ENCODE measurements at regions of chr3 and their contacts with region 1.

Region 1: DNA sequence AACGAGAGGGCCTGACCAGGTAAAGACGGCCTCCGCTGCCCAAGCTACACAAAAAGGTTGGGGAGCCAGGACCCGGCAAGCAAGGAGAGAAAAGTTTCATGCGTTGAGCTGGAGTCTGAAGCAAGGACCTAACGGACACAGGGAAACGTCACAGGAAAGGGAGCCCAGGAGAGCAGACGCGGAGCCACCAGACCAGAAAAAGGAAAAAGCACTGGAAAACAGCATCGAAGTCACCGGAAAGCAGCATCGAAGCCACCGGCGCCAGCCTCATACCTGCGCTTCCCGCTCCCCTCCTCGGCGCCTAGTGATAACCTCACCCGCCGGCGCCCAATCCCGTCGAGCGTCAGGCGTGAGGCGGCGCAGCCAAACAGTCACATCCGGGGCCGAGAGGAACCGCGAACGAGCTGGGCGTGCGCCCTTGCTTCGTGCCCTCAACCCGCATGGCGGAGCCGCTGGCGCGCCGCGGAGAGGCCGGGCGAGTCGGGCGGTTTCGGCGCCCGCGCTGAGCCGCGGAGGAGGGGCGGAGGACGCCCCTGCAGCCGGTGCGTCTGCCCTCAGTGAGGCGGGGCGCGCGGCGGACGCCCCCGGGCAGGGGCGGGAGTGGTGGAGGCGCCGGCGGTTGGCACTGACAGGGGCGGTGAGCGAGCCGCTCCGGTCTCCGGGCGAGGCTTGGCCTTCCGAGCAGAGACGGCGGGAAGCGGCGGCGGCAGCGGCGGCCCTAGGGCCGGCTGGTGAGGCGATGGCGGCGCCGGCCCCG is at the starts of genes FBXO45 and WDR53:
- DNase-seq: peak; percentile 90 to 99 (median 94)
- ATAC-seq: peak; percentile 90
- H3K4me3 ChIP-seq: peak within 1 kb of the TSS; percentile 76
- H3K4me3 Mint-ChIP-seq: peak within 1 kb of the TSS; percentile 98
- H3K27ac ChIP-seq: peak within 1 kb of the TSS; percentile 77 to 81
- H3K27ac Mint-ChIP-seq: peak within 1 kb of the TSS; percentile 97
- H3K4me1 ChIP-seq: peaks cover 47% of the 10 kb centered on the region
- H3K4me1 Mint-ChIP-seq: peaks cover 48% of the 10 kb centered on the region
- H3K27me3 ChIP-seq: no peaks in the 10 kb centered on the region
- H3K27me3 Mint-ChIP-seq: no peaks in the 10 kb centered on the region
- CTCF ChIP-seq: no peak
- total RNA-seq, gene FBXO45: 5.4 to 6.0 TPM
- total RNA-seq, gene WDR53: 18.4 to 20.9 TPM

Region 2: DNA sequence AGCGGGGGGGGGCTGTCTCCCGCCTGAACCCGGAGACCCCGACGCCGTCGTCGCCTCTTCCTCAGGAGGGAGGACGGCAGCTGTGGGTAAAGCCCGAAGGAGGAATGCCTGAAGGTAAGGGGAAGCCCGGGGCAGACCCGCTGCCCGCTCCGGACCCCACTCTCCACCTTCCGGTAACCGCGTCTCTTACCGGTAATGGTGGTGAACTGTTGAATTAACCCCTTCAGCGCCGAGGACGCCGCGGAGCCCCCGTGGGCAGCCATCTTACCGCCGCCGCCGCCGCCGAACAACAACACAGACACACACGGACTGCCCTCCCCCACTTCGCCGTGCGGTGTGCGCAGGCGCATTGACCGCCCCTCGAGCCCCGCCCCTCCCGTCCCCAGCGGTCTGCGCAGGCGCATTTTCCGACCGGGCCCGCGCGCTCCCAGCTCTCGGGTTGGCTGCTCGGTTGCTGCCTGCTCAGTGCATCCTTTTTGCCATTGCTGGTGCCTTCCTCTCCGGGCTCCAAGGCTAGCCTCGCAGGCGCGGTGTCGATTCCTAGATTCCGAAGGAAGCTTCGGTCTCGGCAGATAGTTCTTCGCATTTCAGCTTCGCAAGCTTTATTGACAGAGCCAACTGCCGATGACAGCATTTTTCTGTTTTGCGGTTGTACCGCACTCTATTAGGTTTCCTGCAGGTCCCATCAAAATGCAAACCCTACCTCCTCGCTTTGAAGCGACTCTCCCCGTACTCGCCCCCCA is 136.1 kb before region 1 on chr3 and contains the start of gene UBXN7:
- CTCF ChIA-PET with region 1: no interaction called
- POLR2A ChIA-PET with region 1: interaction called, 9 read pairs
- intact Hi-C with region 1: loop called in 1 of 2 experiments (anchors 1 kb)
- DNase-seq: peak; percentile 92 to 99 (median 97)
- ATAC-seq: peak; percentile 85
- H3K4me3 ChIP-seq: peak within 1 kb of the TSS; percentile 98
- H3K4me3 Mint-ChIP-seq: peak within 1 kb of the TSS; percentile 84
- H3K27ac ChIP-seq: peak within 1 kb of the TSS; percentile 83 to 87
- H3K27ac Mint-ChIP-seq: peak within 1 kb of the TSS; percentile 96
- H3K4me1 ChIP-seq: peaks cover 17% of the 10 kb centered on the region
- H3K4me1 Mint-ChIP-seq: peaks cover 22% of the 10 kb centered on the region
- H3K27me3 ChIP-seq: no peaks in the 10 kb centered on the region
- H3K27me3 Mint-ChIP-seq: no peaks in the 10 kb centered on the region
- CTCF ChIP-seq: no peak
- total RNA-seq, gene UBXN7: 75.3 to 83.6 TPM

Region 3: GRCh38 chr3:196528639-196529233 is 39.7 kb before region 1 on chr3:
- CTCF ChIA-PET with region 1: interaction called, 7 read pairs
- POLR2A ChIA-PET with region 1: interaction called, 15 read pairs
- intact Hi-C with region 1: loop called in 1 of 2 experiments (anchors 5 kb)
- DNase-seq: peak; percentile 48 to 88 (median 72)
- ATAC-seq: peak; percentile 95
- H3K4me3 ChIP-seq: peak overlapping the region; percentile 52
- H3K4me3 Mint-ChIP-seq: peak overlapping the region; percentile 60
- H3K27ac ChIP-seq: no peak overlapping the region
- H3K27ac Mint-ChIP-seq: no peak overlapping the region
- H3K4me1 ChIP-seq: peaks cover 9% of the 10 kb centered on the region
- H3K4me1 Mint-ChIP-seq: peaks cover 4% of the 10 kb centered on the region
- H3K27me3 ChIP-seq: no peaks in the 10 kb centered on the region
- H3K27me3 Mint-ChIP-seq: no peaks in the 10 kb centered on the region
- CTCF ChIP-seq: peak; percentile 77

Region 4: DNA sequence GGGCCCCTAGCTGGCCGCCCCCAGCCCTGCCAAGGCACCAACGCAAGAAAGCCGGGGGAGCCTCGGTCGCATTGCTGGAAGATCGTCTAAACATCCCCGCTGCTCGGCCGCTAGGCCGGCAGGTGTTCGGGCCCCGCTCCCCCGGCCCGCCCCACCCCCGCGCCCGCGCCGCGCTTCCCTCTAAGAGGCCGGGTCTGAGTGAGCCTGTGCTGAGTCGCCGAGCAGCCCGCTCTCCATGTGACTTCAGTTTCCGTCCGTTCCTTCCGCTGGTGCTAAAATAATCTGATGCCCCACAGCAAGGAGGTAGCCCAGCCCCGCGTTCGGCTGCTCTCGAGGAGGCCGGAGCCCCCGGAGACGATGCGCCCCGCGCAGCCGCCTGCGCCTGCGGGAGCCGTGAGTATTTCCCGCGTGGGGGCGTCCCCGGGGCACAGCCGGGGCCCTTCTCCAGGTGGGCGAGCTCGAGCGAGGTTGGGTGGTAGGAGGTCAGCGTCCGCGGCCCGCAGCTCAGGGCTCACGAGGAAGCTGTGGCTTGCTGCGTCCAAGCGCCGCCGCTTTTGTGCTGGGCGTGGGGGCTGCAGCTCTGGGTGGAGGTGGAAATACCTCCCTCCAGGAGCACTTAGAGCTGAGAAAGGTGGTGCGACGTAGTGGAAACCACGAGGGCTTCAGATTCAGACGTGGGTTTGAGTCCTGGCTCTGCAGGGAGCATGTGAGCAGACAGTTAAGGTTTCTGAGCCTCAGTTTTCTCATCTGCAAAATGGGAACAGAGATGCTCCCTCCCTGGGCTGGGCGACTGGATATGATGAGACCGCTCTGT is 71.3 kb after region 1 on chr3 and contains the start of gene NRROS:
- CTCF ChIA-PET with region 1: no interaction called
- POLR2A ChIA-PET with region 1: interaction called, 12 read pairs
- intact Hi-C with region 1: no loop called
- DNase-seq: peak; percentile 29 to 79 (median 54)
- ATAC-seq: peak; percentile 39
- H3K4me3 ChIP-seq: peak within 1 kb of the TSS; percentile 94
- H3K4me3 Mint-ChIP-seq: peak within 1 kb of the TSS; percentile 86
- H3K27ac ChIP-seq: peak within 1 kb of the TSS; percentile 60 to 81
- H3K27ac Mint-ChIP-seq: peak within 1 kb of the TSS; percentile 91
- H3K4me1 ChIP-seq: peaks cover 73% of the 10 kb centered on the region
- H3K4me1 Mint-ChIP-seq: peaks cover 77% of the 10 kb centered on the region
- H3K27me3 ChIP-seq: no peaks in the 10 kb centered on the region
- H3K27me3 Mint-ChIP-seq: no peaks in the 10 kb centered on the region
- CTCF ChIP-seq: no peak
- total RNA-seq, gene NRROS: 7.4 to 8.4 TPM

Region 5: DNA sequence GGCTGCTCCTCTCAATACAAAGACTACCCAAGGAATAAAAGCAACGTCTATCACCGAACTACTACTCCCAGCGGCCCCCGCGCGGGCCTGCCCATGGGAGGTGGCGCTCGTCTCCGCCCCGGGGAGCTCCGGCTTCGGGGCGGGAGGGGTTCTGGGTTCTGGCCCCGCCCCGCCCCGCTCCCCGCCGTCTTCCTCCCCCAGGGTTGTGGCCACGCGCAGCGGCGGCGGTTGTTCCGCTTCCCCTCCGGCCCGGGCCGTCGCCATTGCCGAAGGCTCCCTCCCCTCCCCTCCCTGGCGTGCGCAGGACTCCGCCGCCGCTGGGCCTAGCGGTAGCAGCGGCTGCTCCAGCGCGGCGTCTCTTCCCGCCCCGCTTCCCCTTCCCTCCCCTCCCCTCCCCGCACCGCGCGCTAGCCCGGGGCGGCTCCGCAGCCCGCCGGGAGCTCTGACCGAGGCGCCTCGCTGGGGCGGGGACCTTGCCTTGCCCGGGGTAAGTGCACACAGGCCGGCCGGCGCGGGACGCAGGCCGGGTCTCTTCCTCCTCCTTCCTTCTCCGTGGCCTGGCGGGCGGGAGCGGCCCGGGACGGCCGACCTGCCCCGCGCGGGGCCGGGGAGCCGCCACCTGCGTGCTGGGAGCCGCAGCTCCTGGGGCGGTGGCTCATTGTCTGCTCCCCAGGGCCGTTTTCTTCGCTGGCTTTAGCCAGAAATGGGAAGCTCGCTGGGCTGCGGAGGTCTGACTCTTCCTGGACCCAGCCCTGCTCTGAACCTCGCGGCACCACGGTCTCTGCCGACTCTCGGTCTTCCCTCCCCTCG is 171.5 kb after region 1 on chr3 and contains the start of gene PAK2:
- CTCF ChIA-PET with region 1: interaction called, 6 read pairs
- POLR2A ChIA-PET with region 1: interaction called, 27 read pairs
- intact Hi-C with region 1: loop called in 1 of 2 experiments (anchors 1 kb)
- DNase-seq: peak; percentile 80 to 96 (median 92)
- ATAC-seq: peak; percentile 80
- H3K4me3 ChIP-seq: peak within 1 kb of the TSS; percentile 96
- H3K4me3 Mint-ChIP-seq: peak within 1 kb of the TSS; percentile 98
- H3K27ac ChIP-seq: peak within 1 kb of the TSS; percentile 86 to 95
- H3K27ac Mint-ChIP-seq: peak within 1 kb of the TSS; percentile 95
- H3K4me1 ChIP-seq: peaks cover 21% of the 10 kb centered on the region
- H3K4me1 Mint-ChIP-seq: peaks cover 35% of the 10 kb centered on the region
- H3K27me3 ChIP-seq: no peaks in the 10 kb centered on the region
- H3K27me3 Mint-ChIP-seq: no peaks in the 10 kb centered on the region
- CTCF ChIP-seq: no peak
- total RNA-seq, gene PAK2: 36.2 to 41.7 TPM

Region 6: GRCh38 chr3:196942226-196942914 is 373.9 kb after region 1 on chr3 and contains the start of gene NCBP2:
- CTCF ChIA-PET with region 1: interaction called, 6 read pairs
- POLR2A ChIA-PET with region 1: interaction called, 27 read pairs
- intact Hi-C with region 1: loop called in 1 of 2 experiments (anchors 1 kb)
- DNase-seq: peak; percentile 98 to 100 (median 99)
- ATAC-seq: peak; percentile 92
- H3K4me3 ChIP-seq: peak within 1 kb of the TSS; percentile 89
- H3K4me3 Mint-ChIP-seq: peak within 1 kb of the TSS; percentile 99
- H3K27ac ChIP-seq: peak within 1 kb of the TSS; percentile 94 to 97
- H3K27ac Mint-ChIP-seq: peak within 1 kb of the TSS; percentile 96
- H3K4me1 ChIP-seq: peaks cover 24% of the 10 kb centered on the region
- H3K4me1 Mint-ChIP-seq: peaks cover 51% of the 10 kb centered on the region
- H3K27me3 ChIP-seq: no peaks in the 10 kb centered on the region
- H3K27me3 Mint-ChIP-seq: no peaks in the 10 kb centered on the region
- CTCF ChIP-seq: peak; percentile 59
- total RNA-seq, gene NCBP2: 41.4 to 44.6 TPM

Measured in CD4-positive, alpha-beta T cell (primary cell).